ENCODE measurements at regions of chr6 and their contacts with region 1.

Region 1: GRCh38 chr6:35342258-35343091 is at the start of gene PPARD:
- DNase-seq: peak; percentile 97 to 100 (median 99)

Region 2: GRCh38 chr6:34964564-34964963 is 377.9 kb before region 1 on chr6:
- intact Hi-C with region 1: no loop called
- DNase-seq: no peak

Region 3: DNA sequence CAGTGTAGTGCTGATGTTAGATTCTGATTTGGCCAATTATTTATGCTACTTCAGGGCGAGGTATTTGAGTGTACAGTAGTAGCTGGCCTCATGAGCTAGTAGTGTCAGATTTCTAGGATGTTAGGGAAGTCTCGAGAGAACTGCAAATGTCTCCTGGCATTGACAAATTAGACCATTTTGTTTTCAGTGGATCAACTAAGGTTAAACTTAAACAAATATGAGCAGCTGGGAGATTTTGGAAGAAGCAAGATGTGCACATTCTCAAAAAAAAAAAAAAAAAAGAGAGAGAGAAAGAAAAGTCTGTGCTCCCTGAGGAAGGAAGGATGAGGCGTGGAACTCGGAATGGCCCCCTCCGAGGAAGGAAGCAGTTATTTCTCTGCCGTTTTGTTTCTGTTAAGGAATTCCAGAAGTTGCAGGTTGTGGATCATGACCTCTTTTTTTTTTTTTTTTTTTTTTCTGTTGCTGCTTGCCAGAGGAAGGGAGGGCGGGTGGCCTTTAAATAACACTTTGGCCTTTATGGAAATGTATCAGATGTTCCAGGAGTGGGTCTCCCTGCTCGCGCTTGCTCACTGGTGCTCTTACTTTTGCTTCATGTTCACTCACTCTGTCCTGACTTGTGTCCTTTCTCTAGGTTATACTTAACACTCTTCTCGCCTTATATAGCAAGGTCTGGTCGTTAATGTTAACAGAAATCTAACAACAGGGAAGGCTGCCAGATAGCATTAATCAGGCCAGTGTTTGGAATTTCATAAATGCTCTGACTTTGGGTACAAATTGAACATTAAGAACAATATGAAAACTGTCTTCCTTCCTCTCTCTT is 325.8 kb before region 1 on chr6:
- intact Hi-C with region 1: no loop called
- DNase-seq: no peak

Region 4: GRCh38 chr6:35415065-35415991 is 72.9 kb after region 1 on chr6:
- intact Hi-C with region 1: loop called (anchors 1 kb)
- DNase-seq: peak; percentile 73 to 98 (median 87)